Activated CD4-positive, alpha-beta T cell treated with anti-CD3 and anti-CD28 coated beads for 36 hours (primary cell): ENCODE measurements at regions of chr4 and their contacts with region 1.

Region 1: DNA sequence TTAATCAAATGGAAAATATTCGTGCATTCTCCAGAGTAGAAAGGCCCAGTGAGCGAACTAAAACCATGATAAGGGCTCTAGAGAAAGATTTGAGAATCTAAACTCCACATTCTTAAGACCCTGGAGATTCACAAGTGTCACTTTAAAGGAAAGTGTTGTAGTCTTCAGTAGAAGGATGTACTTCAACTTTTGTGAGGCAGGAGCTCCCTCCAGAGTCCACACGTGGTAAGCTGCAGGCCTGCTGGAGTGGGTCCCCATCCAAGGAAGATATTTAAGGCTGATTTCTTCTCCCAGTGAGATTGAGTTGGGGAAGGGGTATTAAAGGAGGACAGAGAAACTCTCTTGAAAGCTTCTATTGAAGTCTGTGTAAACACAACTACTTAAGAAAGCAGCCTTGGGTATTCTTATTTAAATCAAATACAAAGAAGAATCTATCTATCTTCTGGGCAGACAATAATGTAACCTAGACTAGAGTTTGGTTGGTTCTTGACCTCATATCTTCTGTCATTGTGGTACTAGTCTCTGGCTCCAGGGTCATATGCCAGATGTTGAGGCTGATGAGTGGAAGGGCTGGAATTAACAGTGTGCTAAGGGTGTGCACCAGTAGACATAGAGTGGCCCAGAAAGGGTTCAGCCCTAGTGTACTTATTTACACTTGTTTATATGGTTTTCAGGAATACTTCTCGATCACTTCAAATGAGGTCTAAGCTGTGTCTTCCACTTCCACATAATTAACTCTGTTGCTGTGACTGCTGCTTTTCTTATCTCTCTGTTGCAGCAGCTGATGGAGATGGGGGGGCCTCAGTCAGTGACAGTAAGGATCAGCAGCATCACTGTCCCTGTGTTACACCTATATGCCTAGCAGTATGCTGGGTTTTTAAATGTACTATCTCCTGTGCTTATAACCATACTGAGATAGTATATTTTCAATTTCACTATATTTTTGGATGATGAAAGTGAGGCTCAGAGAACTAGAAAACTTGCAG is 76.1 kb downstream of the HMGB2 start:
- DNase-seq: peak; percentile 76
- ATAC-seq: peak; percentile 94
- H3K4me3 Mint-ChIP-seq: no peak overlapping the region
- H3K27ac Mint-ChIP-seq: no peak overlapping the region
- H3K4me1 Mint-ChIP-seq: peaks cover 7% of the 10 kb centered on the region
- H3K27me3 Mint-ChIP-seq: no peaks in the 10 kb centered on the region

Region 2: GRCh38 chr4:173019711-173020110 is 238.3 kb before region 1 on chr4:
- CTCF ChIA-PET with region 1: interaction called, 34 read pairs
- POLR2A ChIA-PET with region 1: no interaction called
- intact Hi-C with region 1: no loop called
- DNase-seq: no peak
- ATAC-seq: no peak
- H3K4me3 Mint-ChIP-seq: no peak overlapping the region
- H3K27ac Mint-ChIP-seq: no peak overlapping the region
- H3K4me1 Mint-ChIP-seq: no peaks in the 10 kb centered on the region
- H3K27me3 Mint-ChIP-seq: no peaks in the 10 kb centered on the region

Region 3: GRCh38 chr4:173025131-173025530 is 232.9 kb before region 1 on chr4:
- CTCF ChIA-PET with region 1: interaction called, 34 read pairs
- POLR2A ChIA-PET with region 1: no interaction called
- intact Hi-C with region 1: loop called (anchors 1 kb)
- DNase-seq: peak; percentile 26
- ATAC-seq: peak; percentile 65
- H3K4me3 Mint-ChIP-seq: no peak overlapping the region
- H3K27ac Mint-ChIP-seq: no peak overlapping the region
- H3K4me1 Mint-ChIP-seq: peaks cover 4% of the 10 kb centered on the region
- H3K27me3 Mint-ChIP-seq: no peaks in the 10 kb centered on the region